Calu3 (cell line): ENCODE measurements at regions of chr3 and their contacts with region 1.

Region 1: GRCh38 chr3:40476478-40477470 is at the start of gene ZNF619:
- DNase-seq: peak; percentile 62
- H3K4me3 Mint-ChIP-seq: peak within 1 kb of the TSS; percentile 81
- H3K27ac Mint-ChIP-seq: peak within 1 kb of the TSS; percentile 93
- H3K4me1 Mint-ChIP-seq: peaks cover 12% of the 10 kb centered on the region
- H3K27me3 Mint-ChIP-seq: no peaks in the 10 kb centered on the region
- CTCF ChIP-seq: no peak
- total RNA-seq, gene ZNF619: 8.3 and 8.4 TPM in 2 replicates

Region 2: GRCh38 chr3:40278791-40279190 is 198.0 kb before region 1 on chr3:
- CTCF ChIA-PET with region 1: no interaction called
- intact Hi-C with region 1: no loop called
- DNase-seq: no peak
- H3K4me3 Mint-ChIP-seq: no peak overlapping the region
- H3K27ac Mint-ChIP-seq: no peak overlapping the region
- H3K4me1 Mint-ChIP-seq: no peaks in the 10 kb centered on the region
- H3K27me3 Mint-ChIP-seq: peaks cover 8% of the 10 kb centered on the region
- CTCF ChIP-seq: no peak

Region 3: GRCh38 chr3:40404591-40405198 is 72.1 kb before region 1 on chr3:
- CTCF ChIA-PET with region 1: no interaction called
- intact Hi-C with region 1: no loop called
- DNase-seq: no peak
- H3K4me3 Mint-ChIP-seq: no peak overlapping the region
- H3K27ac Mint-ChIP-seq: no peak overlapping the region
- H3K4me1 Mint-ChIP-seq: no peaks in the 10 kb centered on the region
- H3K27me3 Mint-ChIP-seq: no peaks in the 10 kb centered on the region
- CTCF ChIP-seq: no peak

Region 4: DNA sequence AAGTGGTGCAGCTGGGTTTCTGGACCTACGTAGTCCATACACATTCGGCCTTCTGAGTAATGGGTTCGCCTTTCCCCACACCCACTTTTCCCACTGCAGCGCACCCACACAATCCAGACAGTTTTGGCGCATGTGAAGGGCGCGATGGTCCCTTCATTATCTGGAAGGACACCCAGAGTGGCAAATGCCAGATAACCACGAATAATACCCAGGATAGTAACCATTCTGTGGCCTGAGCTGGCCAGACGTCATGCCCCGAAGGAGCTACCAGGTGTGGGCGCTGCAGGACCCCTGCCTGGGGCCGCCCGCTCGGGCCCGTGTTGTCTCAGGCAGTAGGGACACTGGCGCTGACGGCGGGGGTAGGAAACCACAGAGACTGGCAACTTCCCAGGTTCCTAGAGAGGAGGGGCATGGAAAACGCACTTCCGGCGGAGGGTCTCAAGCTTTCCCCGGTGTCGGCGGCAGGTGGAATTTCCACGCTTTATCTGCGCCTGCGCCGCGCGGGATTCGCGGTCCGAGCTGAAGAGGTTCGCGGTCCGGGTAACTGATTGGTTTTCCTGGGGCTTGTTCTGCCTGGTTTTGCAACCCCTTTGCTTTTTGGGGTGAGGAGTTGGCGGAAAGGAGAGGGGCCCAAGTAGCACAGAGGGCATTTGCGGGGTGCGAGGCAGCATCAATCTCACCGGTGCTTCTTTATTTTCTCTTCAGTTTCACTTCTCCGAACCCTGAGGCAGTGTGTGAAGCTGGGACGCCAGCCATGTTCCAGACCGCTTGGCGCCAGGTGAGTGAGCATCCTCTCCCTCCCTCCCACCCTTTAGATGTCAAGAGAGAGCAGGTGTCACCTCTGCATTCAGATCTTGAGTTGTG is 29.1 kb after region 1 on chr3 and contains the start of gene ZNF620:
- CTCF ChIA-PET with region 1: interaction called, 5 read pairs
- intact Hi-C with region 1: loop called (anchors 1 kb)
- DNase-seq: peak; percentile 87
- H3K4me3 Mint-ChIP-seq: peak within 1 kb of the TSS; percentile 83
- H3K27ac Mint-ChIP-seq: peak within 1 kb of the TSS; percentile 63
- H3K4me1 Mint-ChIP-seq: no peaks in the 10 kb centered on the region
- H3K27me3 Mint-ChIP-seq: no peaks in the 10 kb centered on the region
- CTCF ChIP-seq: no peak
- total RNA-seq, gene ZNF620: 11.3 and 13.6 TPM in 2 replicates

Region 5: GRCh38 chr3:40524568-40525285 is 48.0 kb after region 1 on chr3 and contains the start of gene ZNF621:
- CTCF ChIA-PET with region 1: no interaction called
- intact Hi-C with region 1: loop called (anchors 2 kb)
- DNase-seq: peak; percentile 92
- H3K4me3 Mint-ChIP-seq: peak within 1 kb of the TSS; percentile 97
- H3K27ac Mint-ChIP-seq: peak within 1 kb of the TSS; percentile 97
- H3K4me1 Mint-ChIP-seq: peaks cover 12% of the 10 kb centered on the region
- H3K27me3 Mint-ChIP-seq: no peaks in the 10 kb centered on the region
- CTCF ChIP-seq: no peak
- total RNA-seq, gene ZNF621: 21.1 and 22.2 TPM in 2 replicates